ENCODE measurements at regions of chr5 and their contacts with region 1.

Region 1: DNA sequence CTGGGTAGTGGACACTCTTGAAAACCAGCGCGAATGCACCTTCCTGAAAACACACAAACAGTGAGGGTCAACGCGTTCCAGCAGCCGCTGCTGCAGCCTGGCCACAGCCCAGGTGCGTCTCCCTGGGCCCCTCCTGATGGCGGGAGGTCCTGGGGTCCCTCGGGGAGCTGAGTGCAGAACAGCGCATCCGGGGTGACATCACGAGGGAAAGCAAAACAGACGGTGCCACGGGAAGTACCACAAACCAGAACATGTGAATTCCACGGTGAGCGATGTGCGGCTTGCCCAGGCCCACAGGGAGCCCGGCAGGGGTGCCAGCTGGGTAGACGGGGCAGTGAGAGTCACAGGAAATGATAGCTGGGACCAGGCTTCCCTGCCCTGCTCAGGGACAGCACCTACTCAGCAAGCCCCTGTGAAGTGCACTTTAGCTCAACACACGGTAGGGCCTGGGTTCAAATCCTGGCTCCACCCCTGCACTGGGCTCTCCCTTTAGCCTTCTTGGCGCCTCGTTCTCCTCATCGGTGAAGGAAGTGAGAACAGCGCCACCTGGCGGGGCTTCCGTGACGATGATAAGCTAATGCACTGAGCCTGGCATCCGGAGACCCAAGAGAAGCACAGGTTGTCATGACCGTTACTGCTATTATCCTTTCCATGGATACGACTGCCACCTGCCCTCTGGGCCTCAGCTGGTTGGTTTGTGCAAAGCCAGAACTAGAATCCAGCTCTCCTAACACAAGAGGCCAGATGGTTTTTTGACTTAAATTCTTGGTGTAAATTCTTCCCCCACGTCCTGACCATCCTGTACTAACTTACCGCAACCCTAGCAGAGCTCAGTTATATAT is 24.6 kb downstream of the GFPT2 start:
- DNase-seq: peak; percentile 42
- H3K4me3 ChIP-seq: no peak overlapping the region
- H3K27ac ChIP-seq: no peak overlapping the region
- H3K4me1 ChIP-seq: no peaks in the 10 kb centered on the region
- H3K27me3 ChIP-seq: no peaks in the 10 kb centered on the region
- CTCF ChIP-seq: peak; percentile 71 to 80

Region 2: DNA sequence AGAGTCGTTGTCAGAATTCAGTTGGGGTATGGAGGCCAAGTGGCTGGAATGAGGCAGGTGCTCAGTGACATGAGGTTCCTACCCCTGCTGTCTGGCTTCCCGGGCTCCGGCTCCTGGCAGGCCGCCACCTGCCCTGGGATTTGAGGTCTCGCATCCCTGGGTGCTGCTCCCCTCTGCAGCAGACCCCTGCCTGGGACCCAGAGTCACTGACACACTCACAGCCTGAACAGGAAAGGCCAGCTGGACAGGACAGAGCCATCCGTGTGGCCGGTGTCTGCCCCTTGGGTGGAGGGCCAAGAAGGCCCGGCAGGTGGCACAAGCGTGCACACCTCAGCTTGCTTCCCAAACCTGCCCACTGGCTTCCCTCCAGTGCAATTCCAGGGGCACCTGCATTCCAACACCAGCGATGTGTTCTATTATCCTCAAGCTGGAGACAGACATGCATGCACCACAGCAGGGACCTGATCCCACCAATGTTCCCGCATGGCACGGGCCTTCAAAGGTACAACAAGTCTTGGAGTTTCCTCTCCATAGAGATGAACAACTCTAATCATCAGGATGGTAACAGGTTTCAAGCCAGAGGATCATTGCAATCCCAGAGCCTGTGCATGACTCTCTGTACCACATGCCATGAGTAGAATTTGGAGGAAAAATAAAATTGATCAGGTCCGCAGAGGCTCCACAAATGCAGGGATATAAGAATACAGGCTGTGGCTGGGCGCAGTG is 211.4 kb before region 1 on chr5:
- CTCF ChIA-PET with region 1: no interaction called
- dilution Hi-C with region 1: no loop called
- in situ Hi-C with region 1: no loop called
- intact Hi-C with region 1: loop called (anchors 2 kb)
- DNase-seq: peak; percentile 12
- H3K4me3 ChIP-seq: no peak overlapping the region
- H3K27ac ChIP-seq: no peak overlapping the region
- H3K4me1 ChIP-seq: no peaks in the 10 kb centered on the region
- H3K27me3 ChIP-seq: no peaks in the 10 kb centered on the region
- CTCF ChIP-seq: peak; percentile 39 to 71

Region 3: GRCh38 chr5:180126726-180127681 is 201.5 kb before region 1 on chr5:
- CTCF ChIA-PET with region 1: no interaction called
- dilution Hi-C with region 1: no loop called
- in situ Hi-C with region 1: no loop called
- intact Hi-C with region 1: loop called (anchors 1 kb)
- DNase-seq: no peak
- H3K4me3 ChIP-seq: no peak overlapping the region
- H3K27ac ChIP-seq: no peak overlapping the region
- H3K4me1 ChIP-seq: peaks cover 4% of the 10 kb centered on the region
- H3K27me3 ChIP-seq: no peaks in the 10 kb centered on the region
- CTCF ChIP-seq: peak; percentile 60 to 82

Region 4: GRCh38 chr5:180201051-180201987 is 127.2 kb before region 1 on chr5:
- CTCF ChIA-PET with region 1: no interaction called
- dilution Hi-C with region 1: no loop called
- in situ Hi-C with region 1: no loop called
- intact Hi-C with region 1: loop called (anchors 5 kb)
- DNase-seq: no peak
- H3K4me3 ChIP-seq: no peak overlapping the region
- H3K27ac ChIP-seq: no peak overlapping the region
- H3K4me1 ChIP-seq: no peaks in the 10 kb centered on the region
- H3K27me3 ChIP-seq: no peaks in the 10 kb centered on the region
- CTCF ChIP-seq: peak in 1 of 2 donors; percentile 30

Region 5: GRCh38 chr5:180291943-180292831 is 36.3 kb before region 1 on chr5 and contains the start of gene MAPK9:
- CTCF ChIA-PET with region 1: no interaction called
- dilution Hi-C with region 1: no loop called
- in situ Hi-C with region 1: no loop called
- intact Hi-C with region 1: loop called (anchors 1 kb)
- DNase-seq: peak; percentile 75
- H3K4me3 ChIP-seq: peak within 1 kb of the TSS; percentile 78 to 81 (median 81)
- H3K27ac ChIP-seq: peak within 1 kb of the TSS; percentile 33
- H3K4me1 ChIP-seq: peaks cover 5% of the 10 kb centered on the region
- H3K27me3 ChIP-seq: no peaks in the 10 kb centered on the region
- CTCF ChIP-seq: no peak
- total RNA-seq, gene MAPK9: 24.2 to 38.2 TPM

Region 6: GRCh38 chr5:180389252-180390101 is 61.0 kb after region 1 on chr5:
- CTCF ChIA-PET with region 1: no interaction called
- dilution Hi-C with region 1: loop called (anchors 10 kb)
- in situ Hi-C with region 1: no loop called
- intact Hi-C with region 1: no loop called
- DNase-seq: no peak
- H3K4me3 ChIP-seq: no peak overlapping the region
- H3K27ac ChIP-seq: no peak overlapping the region
- H3K4me1 ChIP-seq: no peaks in the 10 kb centered on the region
- H3K27me3 ChIP-seq: no peaks in the 10 kb centered on the region
- CTCF ChIP-seq: no peak

Measured in mammary epithelial cell (primary cell).